Activated CD8-positive, alpha-beta memory T cell treated with anti-CD3 and anti-CD28 coated beads, Interleukin-2, amount 10 ng/mL, durations not matched to agents 7 days and 5 days (primary cell): ENCODE measurements at regions of chr5 and their contacts with region 1.

Region 1: DNA sequence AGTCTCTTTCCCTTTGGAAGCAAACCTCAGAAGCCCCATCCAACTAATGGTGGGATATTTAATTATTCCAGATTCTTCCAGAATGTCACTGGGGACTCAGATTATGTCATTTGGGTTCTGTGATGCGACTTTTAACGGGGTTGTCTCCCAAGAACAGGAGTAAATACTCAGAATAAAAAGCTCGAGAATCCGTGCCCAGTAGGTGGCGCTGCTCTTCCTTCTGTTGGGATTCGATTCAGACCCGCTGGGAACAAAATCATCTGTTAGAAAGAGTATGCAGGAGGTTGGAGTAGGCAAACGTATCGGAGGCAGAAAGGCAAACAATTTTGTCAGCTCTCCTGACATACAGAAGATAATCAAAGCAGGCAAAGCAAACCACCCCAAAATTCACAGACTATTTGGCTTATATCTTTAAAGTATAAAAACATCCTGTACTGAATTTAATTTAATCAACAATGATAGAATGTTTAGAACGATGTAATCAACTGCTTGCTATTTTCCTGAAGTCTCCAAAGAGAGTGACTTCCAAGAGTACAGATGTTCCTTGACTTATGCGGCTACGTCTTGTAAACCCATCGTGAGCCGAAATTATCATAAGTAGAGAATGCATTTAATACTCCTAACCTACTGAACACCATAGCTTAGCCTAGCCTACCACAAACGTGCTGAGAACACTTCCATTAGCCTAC is 169.8 kb upstream of the RAI14 start:
- DNase-seq: peak; percentile 69
- ATAC-seq: no peak
- H3K4me3 Mint-ChIP-seq: no peak overlapping the region
- H3K27ac Mint-ChIP-seq: no peak overlapping the region
- H3K4me1 Mint-ChIP-seq: peaks cover 2% of the 10 kb centered on the region
- H3K27me3 Mint-ChIP-seq: peaks cover 40% of the 10 kb centered on the region

Region 2: GRCh38 chr5:34474573-34475021 is 11.7 kb before region 1 on chr5:
- CTCF ChIA-PET with region 1: interaction called, 21 read pairs
- DNase-seq: no peak
- ATAC-seq: peak; percentile 51
- H3K4me3 Mint-ChIP-seq: no peak overlapping the region
- H3K27ac Mint-ChIP-seq: no peak overlapping the region
- H3K4me1 Mint-ChIP-seq: no peaks in the 10 kb centered on the region
- H3K27me3 Mint-ChIP-seq: peaks cover 24% of the 10 kb centered on the region

Region 3: DNA sequence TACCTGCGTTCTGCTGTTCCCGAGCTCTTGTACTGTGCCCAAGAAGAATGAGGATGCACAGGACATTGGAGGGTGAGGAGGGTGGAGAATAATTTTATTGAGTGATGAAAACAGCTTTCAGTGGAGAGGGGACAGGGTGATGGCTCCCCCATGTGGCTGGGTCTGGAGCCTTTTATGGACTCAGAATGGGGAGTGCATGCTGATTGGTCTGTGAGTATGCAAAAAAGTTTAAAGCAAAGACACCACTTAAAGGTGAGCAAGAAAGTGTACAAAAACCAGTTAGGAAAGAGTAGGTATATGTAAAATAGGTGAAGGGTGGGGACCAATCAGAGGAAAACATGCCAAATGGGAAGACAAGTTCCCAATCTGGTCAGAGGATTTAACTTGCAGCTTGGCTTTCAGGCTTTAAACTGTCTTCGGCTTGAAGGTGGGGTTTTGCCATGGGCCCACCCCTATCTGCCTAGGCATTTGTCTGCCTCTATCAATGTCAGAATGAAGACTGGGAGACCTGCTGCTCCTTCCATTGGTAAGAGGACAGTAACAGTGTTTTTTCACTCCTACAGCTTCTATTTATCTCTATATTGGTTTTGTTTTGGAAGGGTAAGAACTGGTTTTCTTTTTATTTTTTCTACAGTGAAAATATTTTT is 51.8 kb after region 1 on chr5:
- CTCF ChIA-PET with region 1: interaction called, 14 read pairs
- DNase-seq: no peak
- ATAC-seq: no peak
- H3K4me3 Mint-ChIP-seq: no peak overlapping the region
- H3K27ac Mint-ChIP-seq: no peak overlapping the region
- H3K4me1 Mint-ChIP-seq: peaks cover 12% of the 10 kb centered on the region
- H3K27me3 Mint-ChIP-seq: peaks cover 36% of the 10 kb centered on the region

Region 4: DNA sequence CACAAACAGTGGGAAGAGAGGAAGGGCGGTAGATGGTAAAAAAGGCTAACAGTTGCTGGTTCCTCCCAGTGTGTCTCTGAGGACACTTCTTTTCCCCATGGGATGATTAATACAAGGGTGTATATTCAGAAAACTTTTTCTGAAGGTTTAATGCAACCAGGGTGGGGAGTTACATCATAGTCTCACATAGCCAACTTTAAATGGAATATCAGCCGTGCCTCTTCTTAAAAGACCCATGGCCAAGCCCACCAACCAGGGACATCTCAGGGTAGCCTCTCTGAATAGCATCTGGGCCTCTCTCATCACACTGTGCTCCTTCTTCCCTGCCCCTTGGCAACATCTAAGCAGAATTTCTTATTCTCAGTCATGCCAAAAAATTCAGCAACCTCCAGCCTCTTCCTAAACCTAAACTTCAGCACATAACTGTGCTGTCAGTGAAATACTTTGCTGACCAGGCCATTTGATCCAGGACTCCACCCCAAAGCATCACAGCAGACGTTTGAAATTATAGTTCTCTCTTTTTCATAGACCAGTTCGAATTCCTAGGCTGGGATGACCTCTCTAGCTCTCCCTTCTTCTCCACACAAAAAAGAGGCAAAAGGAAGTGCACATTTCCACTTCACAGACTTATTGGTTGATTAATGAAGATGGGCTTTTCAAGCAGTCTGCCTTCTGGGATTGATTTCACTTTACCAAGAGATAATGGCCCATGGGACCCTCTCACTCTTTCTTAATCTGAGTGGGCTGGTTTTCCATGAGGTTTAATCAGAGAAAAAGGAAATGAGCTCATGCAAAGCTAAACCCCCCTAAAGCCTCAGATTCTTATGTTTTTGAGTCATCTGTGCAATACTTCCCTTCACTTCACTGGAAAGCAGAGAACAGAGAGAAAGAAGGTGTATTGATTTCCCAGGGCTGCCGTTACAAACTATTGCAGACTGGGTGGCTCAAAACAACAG is 84.7 kb after region 1 on chr5:
- CTCF ChIA-PET with region 1: no interaction called
- DNase-seq: no peak
- ATAC-seq: no peak
- H3K4me3 Mint-ChIP-seq: no peak overlapping the region
- H3K27ac Mint-ChIP-seq: no peak overlapping the region
- H3K4me1 Mint-ChIP-seq: peaks cover 5% of the 10 kb centered on the region
- H3K27me3 Mint-ChIP-seq: peaks cover 4% of the 10 kb centered on the region

Region 5: GRCh38 chr5:34811706-34812105 is 325.4 kb after region 1 on chr5:
- CTCF ChIA-PET with region 1: no interaction called
- DNase-seq: no peak
- ATAC-seq: no peak
- H3K4me3 Mint-ChIP-seq: no peak overlapping the region
- H3K27ac Mint-ChIP-seq: no peak overlapping the region
- H3K4me1 Mint-ChIP-seq: no peaks in the 10 kb centered on the region
- H3K27me3 Mint-ChIP-seq: peaks cover 7% of the 10 kb centered on the region